ENCODE measurements at regions of chr5 and their contacts with region 1.

Region 1: GRCh38 chr5:140073296-140073695 is 30.2 kb upstream of the NRG2 start:
- DNase-seq: no peak
- ATAC-seq: no peak
- H3K4me3 ChIP-seq: no peak overlapping the region
- H3K4me1 ChIP-seq: no peaks in the 10 kb centered on the region
- CTCF ChIP-seq: peak; percentile 34

Region 2: DNA sequence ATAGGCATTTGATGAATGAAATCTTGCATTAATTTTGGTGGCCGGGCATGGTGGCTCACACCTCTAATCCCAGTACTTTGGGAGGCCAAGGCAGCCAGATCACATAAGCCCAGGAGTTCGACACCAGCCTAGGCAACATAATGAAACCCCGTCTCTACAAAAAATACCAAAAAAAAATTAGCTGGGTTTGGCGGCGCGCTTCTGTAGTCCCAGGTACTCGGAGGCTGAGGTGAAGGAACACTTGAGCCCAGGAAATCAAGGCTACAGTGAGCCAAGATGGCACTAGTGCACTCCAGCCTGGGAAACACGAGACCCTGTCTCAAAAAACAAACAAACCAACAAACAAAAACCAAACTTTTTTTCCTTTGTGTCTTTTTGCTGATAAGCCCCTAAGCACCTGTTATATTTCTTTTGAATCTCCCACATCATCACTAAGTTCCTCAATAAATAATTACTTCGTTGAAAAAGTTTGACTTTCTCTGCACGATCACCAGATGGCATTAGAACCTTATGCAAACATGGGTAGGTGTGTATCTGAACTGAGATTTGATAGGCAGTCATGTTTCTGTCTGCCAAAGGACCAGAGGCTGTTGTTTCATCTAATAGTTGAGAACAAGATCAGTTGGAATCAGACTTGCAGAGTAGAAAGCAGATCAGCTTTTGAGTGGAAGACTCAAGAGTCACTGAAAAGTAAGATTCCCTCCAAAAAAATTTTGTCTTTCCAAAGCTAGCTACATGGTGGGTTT is 785.2 kb before region 1 on chr5:
- intact Hi-C with region 1: no loop called
- DNase-seq: no peak
- ATAC-seq: peak; percentile 31
- H3K4me3 ChIP-seq: no peak overlapping the region
- H3K4me1 ChIP-seq: peaks cover 10% of the 10 kb centered on the region
- CTCF ChIP-seq: no peak

Region 3: DNA sequence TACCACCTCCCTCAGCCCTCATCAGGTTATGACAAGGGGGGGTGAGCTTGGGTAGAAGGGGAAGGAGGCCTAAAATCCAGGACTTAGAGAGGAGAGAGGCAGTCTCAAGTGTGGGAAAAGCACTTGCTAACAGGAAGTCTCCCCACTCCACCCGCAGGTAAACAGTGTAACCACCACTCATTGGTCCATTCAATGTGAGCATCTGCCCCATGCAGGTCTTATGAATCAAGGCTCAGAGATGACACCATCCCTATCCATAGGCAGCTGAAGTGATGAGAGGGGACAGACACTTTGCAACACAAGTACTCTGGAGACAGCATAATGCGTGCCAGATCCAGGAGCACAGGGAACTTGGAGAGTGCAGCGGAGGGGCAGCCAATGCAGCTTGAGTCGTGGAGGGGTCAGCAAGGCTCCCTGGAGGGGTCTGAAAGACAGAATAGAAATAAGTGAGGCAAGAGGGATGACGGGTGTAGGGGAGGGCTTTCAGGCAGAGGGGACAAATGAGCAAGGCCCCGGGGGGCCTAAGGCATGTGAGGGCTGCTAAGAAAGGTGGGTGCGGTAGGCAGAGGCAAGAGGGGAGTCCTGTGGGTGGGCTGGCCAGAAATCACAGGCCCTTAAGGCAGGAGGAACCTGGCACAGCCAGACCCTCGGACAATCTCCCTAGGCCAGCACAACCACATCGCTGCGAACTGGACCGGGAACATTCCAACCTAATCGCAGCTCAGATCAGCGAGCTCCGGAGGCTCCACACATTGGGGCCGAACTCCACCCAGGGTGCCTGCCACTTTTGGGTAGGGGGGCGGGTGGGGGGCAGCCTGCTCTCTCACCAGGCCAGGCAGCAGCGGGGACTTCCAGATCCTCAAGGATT is 78.7 kb after region 1 on chr5:
- intact Hi-C with region 1: loop called (anchors 5 kb)
- DNase-seq: no peak
- ATAC-seq: peak; percentile 35
- H3K4me3 ChIP-seq: no peak overlapping the region
- H3K4me1 ChIP-seq: no peaks in the 10 kb centered on the region
- CTCF ChIP-seq: no peak

Region 4: GRCh38 chr5:140157032-140157803 is 83.9 kb after region 1 on chr5:
- intact Hi-C with region 1: loop called (anchors 5 kb)
- DNase-seq: peak; percentile 88 to 95 (median 93)
- ATAC-seq: peak; percentile 99
- H3K4me3 ChIP-seq: no peak overlapping the region
- H3K4me1 ChIP-seq: peaks cover 3% of the 10 kb centered on the region
- CTCF ChIP-seq: peak; percentile 66

Region 5: GRCh38 chr5:140273401-140273877 is 200.1 kb after region 1 on chr5:
- intact Hi-C with region 1: no loop called
- DNase-seq: no peak
- ATAC-seq: peak; percentile 39
- H3K4me3 ChIP-seq: no peak overlapping the region
- H3K4me1 ChIP-seq: peaks cover 12% of the 10 kb centered on the region
- CTCF ChIP-seq: no peak